Ascending aorta (tissue), 2 donors: ENCODE measurements at regions of chr10 and their contacts with region 1.

Region 1: GRCh38 chr10:100998991-100999741 is 442 bp upstream of the LZTS2 start:
- DNase-seq: peak; percentile 27 to 89
- H3K4me3 ChIP-seq: peak overlapping the region; percentile 79 to 92
- H3K27ac ChIP-seq: peak overlapping the region; percentile 99 to 100
- H3K4me1 ChIP-seq: peaks cover 23 to 32% of the 10 kb centered on the region in 2 donors
- H3K27me3 ChIP-seq: no peaks in the 10 kb centered on the region
- CTCF ChIP-seq: peak; percentile 94 to 99 (median 96)

Region 2: DNA sequence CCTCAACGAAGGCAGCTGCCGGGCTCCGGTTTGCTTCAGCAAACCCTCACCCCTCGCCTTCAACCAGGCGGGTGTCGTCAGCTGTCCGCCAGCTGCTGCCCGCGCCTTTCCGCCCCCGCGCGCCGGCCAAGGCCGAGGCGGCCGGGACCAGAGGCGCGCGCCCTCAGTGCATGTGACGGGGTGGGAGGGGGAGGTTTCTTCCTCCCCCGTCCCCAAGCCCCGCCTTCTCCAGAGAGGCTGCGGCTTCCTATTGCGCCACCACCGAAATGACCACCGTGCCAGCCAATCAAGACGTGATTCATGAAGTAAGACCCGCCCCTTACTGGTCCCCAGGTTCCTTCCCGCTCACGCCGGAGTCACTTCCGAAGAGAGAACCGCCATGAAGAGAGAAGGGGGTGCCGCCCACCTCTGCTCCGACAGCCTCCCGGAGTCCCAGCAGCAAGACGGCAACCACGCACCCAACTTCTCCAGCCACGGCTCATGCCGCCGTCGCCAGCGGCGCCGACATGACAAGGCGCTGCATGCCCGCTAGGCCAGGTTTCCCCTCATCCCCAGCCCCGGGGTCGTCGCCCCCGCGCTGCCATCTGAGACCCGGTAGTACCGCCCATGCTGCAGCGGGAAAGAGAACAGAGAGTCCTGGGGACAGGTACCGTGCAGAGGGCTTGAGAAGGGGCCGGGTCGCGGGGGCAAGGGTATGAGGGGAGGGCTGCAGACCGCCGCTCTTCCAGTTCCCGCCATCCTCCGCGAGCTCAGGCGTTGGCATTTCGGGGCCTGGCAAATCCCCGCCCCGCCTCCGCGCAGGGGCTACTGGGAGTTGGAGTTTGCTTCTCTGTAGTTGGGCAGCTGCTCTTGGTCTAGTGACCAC is 86.3 kb before region 1 on chr10 and contains the start of gene SLF2:
- intact Hi-C with region 1: loop called (anchors 2 kb)
- DNase-seq: peak; percentile 92 to 99
- H3K4me3 ChIP-seq: peak within 1 kb of the TSS; percentile 84 to 89
- H3K27ac ChIP-seq: peak within 1 kb of the TSS; percentile 89 to 90
- H3K4me1 ChIP-seq: peaks cover 5 to 20% of the 10 kb centered on the region in 2 donors
- H3K27me3 ChIP-seq: no peaks in the 10 kb centered on the region
- CTCF ChIP-seq: no peak
- total RNA-seq, gene SLF2: 3.1 TPM

Region 3: DNA sequence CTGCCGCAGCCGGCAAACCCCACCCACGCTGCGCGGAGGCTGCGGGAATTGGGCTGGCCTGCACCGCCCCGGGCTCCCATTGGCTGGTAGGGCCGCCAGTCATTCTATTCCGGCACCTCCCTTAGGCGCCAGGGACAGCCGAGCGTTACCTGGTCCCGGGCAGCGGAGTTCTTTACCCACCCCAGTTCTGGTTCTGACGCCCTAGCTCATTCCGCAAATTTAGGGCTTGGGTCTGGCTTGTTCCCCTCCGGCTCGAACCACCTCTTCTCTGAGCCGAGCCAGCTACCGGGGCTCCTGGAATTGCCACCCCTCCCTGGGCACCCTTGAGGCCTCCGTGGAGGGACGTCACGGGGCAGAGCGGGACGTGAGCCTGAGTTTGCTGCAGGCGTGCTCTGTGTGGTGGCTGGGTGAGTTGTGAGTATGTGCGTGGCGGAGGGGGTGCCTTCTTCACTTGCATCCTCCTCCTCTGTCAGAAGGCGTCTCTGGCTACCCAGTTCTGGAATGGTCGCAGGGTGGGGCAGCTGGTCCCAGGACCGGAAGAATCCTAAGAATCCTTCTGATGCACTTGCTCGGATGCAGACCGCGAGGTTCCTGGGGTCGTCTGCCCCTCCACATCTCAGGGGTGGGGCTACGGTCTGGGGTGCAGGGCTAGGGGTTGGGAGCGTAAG is 32.1 kb after region 1 on chr10 and contains the starts of genes PDZD7 and SFXN3:
- intact Hi-C with region 1: loop called (anchors 1 kb)
- DNase-seq: peak; percentile 80 to 97
- H3K4me3 ChIP-seq: peak within 1 kb of the TSS; percentile 72 to 92
- H3K27ac ChIP-seq: peak within 1 kb of the TSS; percentile 99
- H3K4me1 ChIP-seq: peaks cover 20 to 30% of the 10 kb centered on the region in 2 donors
- H3K27me3 ChIP-seq: no peaks in the 10 kb centered on the region
- CTCF ChIP-seq: no peak
- total RNA-seq, gene PDZD7: 0.53 TPM
- total RNA-seq, gene SFXN3: 72.4 TPM

Region 4: GRCh38 chr10:101060036-101060950 is 61.1 kb after region 1 on chr10:
- intact Hi-C with region 1: loop called (anchors 2 kb)
- DNase-seq: peak; percentile 82 to 96
- H3K4me3 ChIP-seq: peak overlapping the region; percentile 60 to 79
- H3K27ac ChIP-seq: peak overlapping the region; percentile 96 to 98
- H3K4me1 ChIP-seq: peaks cover 2 to 33% of the 10 kb centered on the region in 2 donors
- H3K27me3 ChIP-seq: no peaks in the 10 kb centered on the region
- CTCF ChIP-seq: peak; percentile 75 to 89 (median 78)

Region 5: DNA sequence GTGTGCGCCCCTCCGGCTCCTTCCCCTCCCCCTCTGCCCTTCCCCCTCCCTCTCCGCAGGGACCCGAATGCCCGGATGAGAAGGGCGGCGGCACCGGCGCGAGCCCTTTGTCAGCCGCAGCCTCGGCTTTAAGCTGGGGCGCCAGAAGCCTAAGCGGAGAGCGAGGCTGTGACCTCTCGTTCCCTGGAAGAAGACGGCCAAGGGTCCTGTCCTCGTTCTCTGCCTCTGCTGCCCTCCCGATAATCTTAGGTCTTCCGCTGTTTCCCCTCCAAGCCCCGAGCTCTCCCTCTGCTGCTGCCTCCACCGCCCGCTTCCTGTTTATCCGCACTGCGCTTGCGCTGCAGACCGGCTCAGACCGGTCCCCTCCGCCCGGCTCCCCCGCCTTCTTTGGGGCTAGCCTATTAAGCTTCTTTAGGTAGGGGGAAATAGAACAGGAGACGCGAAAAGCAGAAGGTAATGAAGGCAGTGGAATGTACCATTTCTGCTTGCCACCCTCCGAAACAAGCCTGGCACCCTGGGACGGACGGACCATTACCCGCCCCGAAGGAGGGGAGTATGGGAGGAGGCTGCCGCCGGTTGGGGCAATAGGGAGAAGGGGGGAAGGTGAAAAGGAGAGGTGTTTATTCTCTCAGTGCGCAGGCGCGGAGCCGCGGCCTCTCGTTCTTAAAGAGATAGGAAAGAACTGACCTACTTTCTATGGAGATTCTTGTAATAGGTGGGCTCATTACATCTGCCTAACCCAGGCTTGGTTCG is 819.1 kb after region 1 on chr10 and contains the start of gene OGA:
- intact Hi-C with region 1: loop called (anchors 5 kb)
- DNase-seq: peak; percentile 96 to 99
- H3K4me3 ChIP-seq: peak within 1 kb of the TSS; percentile 83 to 88
- H3K27ac ChIP-seq: peak within 1 kb of the TSS; percentile 87 to 89
- H3K4me1 ChIP-seq: peaks cover 0 to 7% of the 10 kb centered on the region in 2 donors
- H3K27me3 ChIP-seq: no peaks in the 10 kb centered on the region
- CTCF ChIP-seq: no peak
- total RNA-seq, gene OGA: 66.8 TPM